Calu3 (cell line): ENCODE measurements at regions of chr7 and their contacts with region 1.

Region 1: GRCh38 chr7:134820778-134821177 is 41.3 kb downstream of the CALD1 start:
- DNase-seq: no peak
- H3K4me3 Mint-ChIP-seq: no peak overlapping the region
- H3K27ac Mint-ChIP-seq: no peak overlapping the region
- H3K4me1 Mint-ChIP-seq: no peaks in the 10 kb centered on the region
- H3K27me3 Mint-ChIP-seq: no peaks in the 10 kb centered on the region
- CTCF ChIP-seq: no peak

Region 2: DNA sequence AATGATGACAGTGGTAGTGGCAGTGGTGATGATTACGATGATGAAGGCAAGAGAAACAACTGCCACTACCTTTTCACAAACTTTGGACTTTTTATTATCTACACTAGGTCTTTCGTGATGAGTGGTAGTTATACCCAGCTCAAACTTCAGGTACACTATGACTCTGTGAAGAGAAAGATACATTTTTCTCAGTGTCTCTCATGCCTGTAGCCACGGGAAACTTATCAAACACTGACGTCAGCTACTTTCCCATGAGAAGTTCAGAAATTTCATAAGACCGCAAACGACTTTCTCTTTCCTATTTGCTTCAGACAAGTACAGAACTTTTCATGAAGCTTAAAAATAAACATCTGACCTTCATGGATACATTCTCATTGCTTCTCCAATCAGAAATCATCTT is 15.7 kb after region 1 on chr7:
- CTCF ChIA-PET with region 1: interaction called, 4 read pairs
- intact Hi-C with region 1: loop called (anchors 1 kb)
- DNase-seq: no peak
- H3K4me3 Mint-ChIP-seq: no peak overlapping the region
- H3K27ac Mint-ChIP-seq: no peak overlapping the region
- H3K4me1 Mint-ChIP-seq: no peaks in the 10 kb centered on the region
- H3K27me3 Mint-ChIP-seq: no peaks in the 10 kb centered on the region
- CTCF ChIP-seq: no peak